Calu3 (cell line): ENCODE measurements at regions of chr12 and their contacts with region 1.

Region 1: DNA sequence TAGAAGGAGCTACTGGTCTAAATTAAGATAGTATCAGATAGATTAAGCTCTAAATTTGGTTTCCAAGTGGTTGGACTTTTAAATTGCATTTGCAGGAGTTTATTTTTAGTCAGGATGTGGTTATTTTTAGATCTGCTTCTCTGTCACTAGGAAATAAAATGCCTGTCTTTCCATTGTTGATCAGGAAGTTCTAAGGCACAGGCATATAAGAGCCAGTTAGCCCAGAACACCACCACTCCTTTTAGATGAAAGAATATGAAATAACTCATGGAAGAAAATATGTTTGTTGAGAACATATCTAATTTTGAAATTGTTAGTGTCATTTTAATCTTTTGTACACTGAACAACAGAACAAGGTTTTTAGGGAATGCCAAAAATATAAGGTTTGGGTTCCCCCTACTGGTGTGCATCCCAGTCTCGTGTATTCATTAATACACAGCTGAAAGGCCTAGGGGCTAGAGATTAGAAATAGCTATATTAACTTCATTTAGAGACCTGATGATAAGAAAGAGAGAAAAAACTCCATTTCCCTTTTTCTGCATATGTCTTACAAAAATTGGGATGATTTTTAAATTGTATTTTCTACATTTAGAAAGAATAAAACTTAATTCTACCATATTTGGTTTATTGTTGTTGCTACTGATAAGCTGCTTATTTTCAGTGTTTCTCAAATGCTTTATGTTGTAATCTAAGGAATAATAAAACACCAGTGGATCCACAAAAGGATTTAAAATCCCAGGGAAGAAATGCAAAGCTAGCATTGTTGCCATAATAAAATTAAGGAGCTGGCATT is 67.2 kb downstream of the RIC8B start:
- DNase-seq: peak; percentile 60
- H3K4me3 Mint-ChIP-seq: no peak overlapping the region
- H3K27ac Mint-ChIP-seq: no peak overlapping the region
- H3K4me1 Mint-ChIP-seq: peaks cover 16% of the 10 kb centered on the region
- H3K27me3 Mint-ChIP-seq: no peaks in the 10 kb centered on the region
- CTCF ChIP-seq: peak; percentile 52

Region 2: DNA sequence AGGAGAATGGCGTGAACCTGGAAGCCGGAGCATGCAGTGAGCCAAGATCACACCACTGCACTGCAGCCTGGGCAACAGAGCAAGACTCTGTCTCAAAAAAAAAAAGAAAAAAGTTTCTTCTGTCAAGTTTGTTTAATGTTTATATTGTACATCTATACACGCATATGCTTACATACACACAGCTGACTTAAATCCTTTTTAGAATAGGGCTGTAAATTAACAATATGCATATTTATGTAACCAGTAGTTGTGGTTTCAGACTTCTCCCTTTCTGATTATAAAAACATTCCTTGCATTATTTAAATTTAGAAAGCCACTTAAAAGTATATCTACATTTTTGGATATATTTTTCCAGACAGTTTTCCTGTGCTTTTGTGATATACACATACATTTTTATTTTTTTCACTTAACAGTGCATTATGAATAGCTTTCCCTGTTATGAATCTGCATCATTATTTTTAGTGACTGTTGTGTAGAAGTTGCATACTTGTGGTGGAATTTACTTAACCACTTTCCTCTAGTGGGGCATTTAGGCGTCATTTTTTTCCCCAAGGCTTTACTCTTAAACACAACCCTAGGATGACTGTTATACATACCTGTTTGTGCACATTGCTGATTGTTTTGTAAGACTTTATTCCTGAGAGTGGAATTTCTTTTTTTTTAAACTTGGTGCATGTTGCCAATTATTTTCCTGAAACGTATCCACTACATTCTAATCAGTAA is 454.7 kb before region 1 on chr12:
- CTCF ChIA-PET with region 1: interaction called, 6 read pairs
- intact Hi-C with region 1: loop called (anchors 1 kb)
- DNase-seq: no peak
- H3K4me3 Mint-ChIP-seq: no peak overlapping the region
- H3K27ac Mint-ChIP-seq: no peak overlapping the region
- H3K4me1 Mint-ChIP-seq: peaks cover 10% of the 10 kb centered on the region
- H3K27me3 Mint-ChIP-seq: no peaks in the 10 kb centered on the region
- CTCF ChIP-seq: no peak

Region 3: DNA sequence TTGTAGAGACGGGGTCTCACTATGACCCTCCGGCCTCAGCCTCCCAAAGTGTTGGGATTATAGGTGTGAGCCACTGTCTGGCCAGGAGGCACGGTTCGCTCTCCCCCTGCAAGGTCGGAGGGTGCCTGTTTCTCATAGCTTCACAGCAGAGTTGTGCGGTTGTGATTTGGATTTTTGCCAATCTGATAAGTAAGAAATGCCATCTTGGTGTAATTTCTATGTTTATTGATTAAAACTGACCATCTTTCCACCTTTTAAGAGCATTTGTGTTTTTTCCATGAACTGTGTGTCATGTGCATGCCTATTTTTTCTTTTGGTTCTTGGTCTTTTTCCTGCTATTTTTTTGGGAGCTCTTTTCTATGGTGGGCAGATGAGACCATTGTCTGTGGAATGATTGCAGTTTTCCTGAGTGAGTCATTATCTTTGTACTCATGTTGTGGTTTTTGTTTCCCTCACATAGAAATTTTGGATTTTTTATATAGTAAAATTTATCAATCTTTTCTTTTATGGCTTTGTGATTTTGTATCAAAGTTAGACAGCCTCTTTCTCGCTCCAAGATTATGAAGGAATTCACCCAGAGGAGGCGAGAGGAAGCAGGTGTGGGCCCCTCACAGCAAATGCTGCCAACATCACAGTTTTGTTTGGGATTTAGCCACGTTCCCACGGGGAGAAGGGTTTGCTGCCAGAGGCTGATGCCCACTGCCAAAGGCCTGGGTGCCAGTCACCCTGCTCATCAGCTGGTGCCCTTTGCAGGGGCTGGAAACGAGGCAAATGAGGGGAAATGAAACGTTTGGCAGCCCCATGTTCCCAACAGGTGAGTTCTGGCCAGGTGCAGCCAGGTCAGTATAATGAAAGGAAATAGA is 211.7 kb before region 1 on chr12:
- CTCF ChIA-PET with region 1: interaction called, 6 read pairs
- intact Hi-C with region 1: loop called (anchors 5 kb)
- DNase-seq: peak; percentile 30
- H3K4me3 Mint-ChIP-seq: no peak overlapping the region
- H3K27ac Mint-ChIP-seq: peak overlapping the region; percentile 78
- H3K4me1 Mint-ChIP-seq: peaks cover 88% of the 10 kb centered on the region
- H3K27me3 Mint-ChIP-seq: no peaks in the 10 kb centered on the region
- CTCF ChIP-seq: no peak

Region 4: DNA sequence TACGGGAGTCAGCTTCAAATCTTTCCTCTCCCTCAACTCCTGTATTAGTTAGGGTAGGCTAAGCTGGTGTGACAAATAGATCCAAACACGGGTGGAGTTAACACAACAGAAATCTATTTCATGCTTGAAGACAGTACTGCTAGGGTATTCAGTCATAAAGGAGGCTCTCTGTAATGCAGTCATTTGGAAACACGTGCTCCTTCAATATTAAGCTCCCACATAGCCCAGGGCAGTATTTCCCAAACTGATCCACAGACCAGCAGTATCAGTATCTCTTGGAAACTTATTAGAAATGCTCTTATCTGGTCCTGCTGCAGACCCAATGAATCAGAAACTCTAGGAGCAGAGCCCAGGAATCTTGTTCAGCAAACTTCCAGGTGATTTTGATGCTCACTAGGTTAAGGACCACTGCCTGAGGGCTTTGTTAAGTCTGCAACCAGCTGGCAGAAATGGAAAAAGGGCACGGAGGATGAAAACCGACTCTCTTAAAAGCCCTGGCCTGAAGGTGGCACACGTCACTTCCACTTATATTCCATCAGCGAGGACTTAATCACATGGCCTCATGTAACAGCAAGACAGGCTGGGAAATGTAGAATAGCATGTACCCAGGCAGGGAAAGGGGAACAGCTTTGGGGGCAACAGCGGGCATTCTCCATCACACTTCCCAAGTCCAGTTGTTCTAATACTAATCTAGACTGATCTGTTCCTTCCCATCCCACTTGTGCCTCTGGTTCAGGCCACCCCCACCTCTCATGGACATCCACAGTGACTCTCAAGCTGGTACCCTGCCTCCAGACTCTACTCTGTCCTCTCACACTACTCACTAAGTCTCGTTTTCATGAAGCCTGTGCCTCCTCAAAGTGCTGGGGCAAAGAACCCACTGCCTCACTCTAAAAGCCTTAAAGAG is 105.4 kb before region 1 on chr12:
- CTCF ChIA-PET with region 1: interaction called, 3 read pairs
- intact Hi-C with region 1: loop called (anchors 5 kb)
- DNase-seq: no peak
- H3K4me3 Mint-ChIP-seq: no peak overlapping the region
- H3K27ac Mint-ChIP-seq: no peak overlapping the region
- H3K4me1 Mint-ChIP-seq: peaks cover 18% of the 10 kb centered on the region
- H3K27me3 Mint-ChIP-seq: no peaks in the 10 kb centered on the region
- CTCF ChIP-seq: no peak

Region 5: DNA sequence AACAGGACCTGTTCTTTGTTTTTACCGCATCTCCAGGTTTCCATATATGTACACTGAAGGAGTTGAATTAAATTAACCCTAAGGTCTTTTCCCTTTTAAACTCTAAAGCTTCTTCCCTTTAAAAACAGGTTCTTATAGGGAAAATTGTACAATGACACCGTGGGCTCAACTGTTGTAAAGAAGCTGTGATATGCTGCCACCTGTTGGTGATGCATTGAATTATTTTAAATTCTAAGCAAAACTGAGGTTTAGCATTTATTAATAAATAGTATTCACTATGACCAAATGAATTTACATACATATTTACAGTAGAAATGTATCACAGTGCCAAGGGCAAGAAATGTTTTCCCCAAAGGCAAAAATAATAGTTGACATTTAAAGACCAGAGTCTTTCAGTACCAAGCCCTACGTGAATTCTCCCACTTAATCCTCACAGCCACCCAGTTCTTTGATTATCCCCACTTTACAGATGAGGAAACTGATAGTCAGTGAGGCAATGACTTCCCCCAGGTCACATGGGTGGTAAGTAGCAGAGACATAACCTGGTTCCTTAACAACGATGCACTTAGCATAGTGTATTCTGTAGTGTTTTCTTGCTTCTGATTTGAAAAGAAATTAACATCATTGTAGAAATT is 78.3 kb after region 1 on chr12:
- CTCF ChIA-PET with region 1: interaction called, 7 read pairs
- intact Hi-C with region 1: loop called (anchors 5 kb)
- DNase-seq: peak; percentile 48
- H3K4me3 Mint-ChIP-seq: no peak overlapping the region
- H3K27ac Mint-ChIP-seq: no peak overlapping the region
- H3K4me1 Mint-ChIP-seq: peaks cover 8% of the 10 kb centered on the region
- H3K27me3 Mint-ChIP-seq: no peaks in the 10 kb centered on the region
- CTCF ChIP-seq: peak; percentile 58